AG04449 (cell line): ENCODE measurements at regions of chr17 and their contacts with region 1.

Region 1: DNA sequence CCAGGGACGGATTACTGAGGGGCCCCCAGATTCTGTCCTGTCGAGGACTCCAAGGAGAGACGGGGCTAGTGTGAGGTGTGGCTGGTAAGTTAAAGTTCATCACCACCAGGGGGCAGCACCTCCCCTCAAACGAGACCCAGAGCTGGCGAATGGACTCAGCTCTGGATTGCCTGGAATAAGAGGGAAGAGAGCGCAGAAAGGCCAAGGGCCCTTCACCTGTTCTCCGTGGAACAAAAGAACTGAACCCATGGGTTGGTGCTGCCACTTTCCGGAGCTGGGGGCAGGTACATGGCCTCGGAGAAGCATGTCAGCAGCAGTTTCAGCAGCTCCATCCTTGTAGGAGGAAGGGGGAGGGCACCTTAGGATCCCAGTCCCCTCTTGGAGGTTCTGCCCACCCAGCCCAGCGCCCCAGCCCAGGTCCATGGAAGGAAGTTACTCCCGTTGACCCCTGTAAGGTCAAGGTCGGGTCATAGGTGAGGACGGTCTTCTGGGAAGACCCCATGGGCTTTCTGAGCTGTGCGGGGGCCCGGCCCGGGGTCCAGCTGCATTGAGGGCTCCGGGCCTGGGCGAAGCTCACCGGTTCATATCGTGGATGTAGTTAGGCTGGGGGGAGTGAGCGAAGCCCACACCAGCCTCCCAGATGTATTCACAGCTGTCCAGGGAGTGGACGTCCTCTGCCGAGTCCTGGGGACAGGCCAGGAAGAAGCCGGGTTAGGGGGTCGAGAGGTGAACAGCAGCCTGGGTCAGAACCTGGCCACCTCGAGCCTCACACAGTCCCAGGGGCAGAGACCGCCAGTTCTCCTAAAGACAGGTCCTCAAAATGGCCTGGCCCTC is 10.7 kb downstream of the HID1 start:
- DNase-seq: peak; percentile 10
- H3K4me3 ChIP-seq: no peak overlapping the region
- CTCF ChIP-seq: peak; percentile 76

Region 2: GRCh38 chr17:74748529-74749365 is 213.1 kb before region 1 on chr17 and contains the start of gene NHERF1:
- CTCF ChIA-PET with region 1: interaction called, 38 read pairs
- POLR2A ChIA-PET with region 1: no interaction called
- DNase-seq: peak; percentile 38
- H3K4me3 ChIP-seq: peak within 1 kb of the TSS; percentile 76
- CTCF ChIP-seq: peak; percentile 18

Region 3: DNA sequence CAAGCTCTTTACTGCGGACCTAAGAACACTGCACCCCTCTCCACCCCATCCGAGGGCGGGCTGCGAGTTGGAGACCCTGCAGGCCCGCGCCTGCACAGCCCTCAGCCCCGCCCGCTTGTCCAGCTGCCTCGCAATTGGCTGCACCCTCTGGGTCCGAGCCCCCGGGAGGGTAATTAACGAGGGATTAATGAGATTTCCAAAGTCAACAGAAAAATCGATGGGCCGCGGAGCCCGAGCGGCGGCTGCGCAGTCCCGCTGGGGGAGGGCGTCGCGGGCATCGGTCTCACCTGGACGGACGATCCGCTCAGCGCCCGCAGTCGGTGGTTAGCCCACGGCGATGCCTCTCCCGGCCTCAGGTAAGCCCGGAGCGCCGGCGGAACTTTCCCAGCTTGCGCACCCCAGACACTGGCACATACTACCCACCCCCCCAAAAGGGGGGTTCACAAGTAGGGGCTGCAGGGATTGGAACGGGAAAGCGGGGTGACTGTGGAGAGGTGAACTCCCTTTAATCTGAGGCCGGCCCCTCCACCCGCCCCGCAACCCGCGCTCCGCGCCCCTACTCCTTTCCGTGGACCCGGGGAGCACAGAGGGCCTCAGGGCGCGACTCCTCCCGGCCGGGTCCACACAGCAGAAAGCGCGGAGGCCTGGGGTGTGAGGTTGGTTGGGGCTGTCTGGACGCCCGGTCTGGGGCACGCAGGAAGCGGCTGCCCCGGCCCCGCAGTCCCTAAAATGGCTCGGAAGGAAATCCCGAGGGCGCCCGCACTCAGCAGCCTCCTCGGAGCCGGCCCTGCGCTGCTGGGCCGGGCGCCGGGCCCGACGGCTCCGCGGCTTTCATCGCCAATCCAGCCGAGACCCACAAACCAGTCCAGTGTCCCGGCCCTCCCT is 26.0 kb before region 1 on chr17 and contains the start of gene OTOP3:
- CTCF ChIA-PET with region 1: interaction called, 19 read pairs
- POLR2A ChIA-PET with region 1: no interaction called
- DNase-seq: no peak
- H3K4me3 ChIP-seq: no peak within 1 kb of the TSS
- CTCF ChIP-seq: no peak

Region 4: GRCh38 chr17:74987418-74987908 is 25.6 kb after region 1 on chr17 and contains the start of gene CDR2L:
- CTCF ChIA-PET with region 1: interaction called, 26 read pairs
- POLR2A ChIA-PET with region 1: interaction called, 3 read pairs
- DNase-seq: peak; percentile 67
- H3K4me3 ChIP-seq: peak within 1 kb of the TSS; percentile 74
- CTCF ChIP-seq: no peak

Region 5: GRCh38 chr17:75034236-75034908 is 72.5 kb after region 1 on chr17:
- CTCF ChIA-PET with region 1: interaction called, 29 read pairs
- POLR2A ChIA-PET with region 1: interaction called, 3 read pairs
- DNase-seq: no peak
- H3K4me3 ChIP-seq: peak overlapping the region; percentile 95
- CTCF ChIP-seq: peak; percentile 2

Region 6: GRCh38 chr17:75173526-75173925 is 211.7 kb after region 1 on chr17:
- CTCF ChIA-PET with region 1: interaction called, 11 read pairs
- POLR2A ChIA-PET with region 1: no interaction called
- DNase-seq: no peak
- H3K4me3 ChIP-seq: no peak overlapping the region
- CTCF ChIP-seq: no peak